Caco-2 (cell line): ENCODE measurements at regions of chr12 and their contacts with region 1.

Region 1: DNA sequence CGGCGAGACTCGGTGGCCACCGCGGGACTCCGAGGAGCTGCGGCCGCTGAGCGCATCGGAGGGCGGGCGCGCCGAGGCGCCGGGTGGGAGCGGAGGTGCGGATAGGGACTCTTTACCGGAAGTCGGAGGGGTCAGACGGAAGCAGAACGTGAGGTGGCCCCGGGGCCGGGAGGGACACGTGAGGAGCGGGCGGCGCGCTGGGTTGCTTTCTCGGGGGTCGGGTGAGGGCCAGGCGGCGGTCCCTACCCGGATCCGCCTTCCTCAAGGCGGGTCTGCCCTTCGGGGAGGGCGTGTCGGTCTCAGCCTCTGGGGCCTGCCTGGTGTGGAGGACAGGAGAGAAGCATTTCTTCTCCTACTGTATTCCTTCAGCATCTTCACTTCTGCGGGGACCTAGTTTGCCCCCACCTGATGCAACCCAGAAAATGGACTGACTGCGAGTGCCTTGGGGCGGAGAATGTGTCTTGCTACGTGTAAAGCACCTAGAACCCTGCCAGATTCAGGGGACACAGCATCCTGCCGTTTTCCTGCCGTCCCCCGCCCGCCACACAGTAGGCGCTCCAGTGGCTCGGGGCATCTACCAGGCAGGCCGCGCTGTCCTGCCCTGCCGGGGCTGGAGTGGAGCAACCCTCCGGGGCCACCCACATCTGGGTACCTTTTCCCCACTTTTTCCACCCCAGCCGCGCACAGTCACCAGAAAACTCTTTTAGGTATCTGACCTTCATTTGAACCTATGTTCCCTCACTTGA is 517 bp upstream of the ATXN2 start:
- DNase-seq: peak; percentile 96
- H3K4me3 ChIP-seq: peak overlapping the region; percentile 96
- H3K4me3 Mint-ChIP-seq: peak overlapping the region; percentile 89
- H3K27ac Mint-ChIP-seq: peak overlapping the region; percentile 85
- H3K4me1 ChIP-seq: peaks cover 19% of the 10 kb centered on the region
- H3K4me1 Mint-ChIP-seq: no peaks in the 10 kb centered on the region
- H3K27me3 ChIP-seq: no peaks in the 10 kb centered on the region
- H3K27me3 Mint-ChIP-seq: no peaks in the 10 kb centered on the region
- CTCF ChIP-seq: no peak

Region 2: GRCh38 chr12:111578274-111578970 is 21.2 kb before region 1 on chr12:
- CTCF ChIA-PET with region 1: no interaction called
- POLR2A ChIA-PET with region 1: no interaction called
- intact Hi-C with region 1: loop called (anchors 2 kb)
- DNase-seq: peak in 1 of 2 experiments; percentile 28
- H3K4me3 ChIP-seq: no peak overlapping the region
- H3K4me3 Mint-ChIP-seq: no peak overlapping the region
- H3K27ac Mint-ChIP-seq: peak overlapping the region; percentile 19
- H3K4me1 ChIP-seq: peaks cover 30% of the 10 kb centered on the region
- H3K4me1 Mint-ChIP-seq: peaks cover 6% of the 10 kb centered on the region
- H3K27me3 ChIP-seq: no peaks in the 10 kb centered on the region
- H3K27me3 Mint-ChIP-seq: no peaks in the 10 kb centered on the region
- CTCF ChIP-seq: no peak

Region 3: GRCh38 chr12:111624540-111624939 is 24.9 kb after region 1 on chr12:
- CTCF ChIA-PET with region 1: no interaction called
- POLR2A ChIA-PET with region 1: no interaction called
- intact Hi-C with region 1: no loop called
- DNase-seq: peak; percentile 50 to 58
- H3K4me3 ChIP-seq: no peak overlapping the region
- H3K4me3 Mint-ChIP-seq: no peak overlapping the region
- H3K27ac Mint-ChIP-seq: peak overlapping the region; percentile 51
- H3K4me1 ChIP-seq: peaks cover 9% of the 10 kb centered on the region; the same call in 1 of the 2 replicates
- H3K4me1 Mint-ChIP-seq: peaks cover 19% of the 10 kb centered on the region
- H3K27me3 ChIP-seq: no peaks in the 10 kb centered on the region
- H3K27me3 Mint-ChIP-seq: no peaks in the 10 kb centered on the region
- CTCF ChIP-seq: no peak

Region 4: GRCh38 chr12:111656016-111656415 is 56.4 kb after region 1 on chr12:
- CTCF ChIA-PET with region 1: no interaction called
- POLR2A ChIA-PET with region 1: no interaction called
- intact Hi-C with region 1: loop called (anchors 10 kb)
- DNase-seq: no peak
- H3K4me3 ChIP-seq: no peak overlapping the region
- H3K4me3 Mint-ChIP-seq: no peak overlapping the region
- H3K27ac Mint-ChIP-seq: no peak overlapping the region
- H3K4me1 ChIP-seq: no peaks in the 10 kb centered on the region
- H3K4me1 Mint-ChIP-seq: no peaks in the 10 kb centered on the region
- H3K27me3 ChIP-seq: no peaks in the 10 kb centered on the region
- H3K27me3 Mint-ChIP-seq: no peaks in the 10 kb centered on the region
- CTCF ChIP-seq: no peak

Region 5: GRCh38 chr12:111673503-111673902 is 73.9 kb after region 1 on chr12:
- CTCF ChIA-PET with region 1: no interaction called
- POLR2A ChIA-PET with region 1: no interaction called
- intact Hi-C with region 1: loop called (anchors 5 kb)
- DNase-seq: peak in 1 of 2 experiments; percentile 15
- H3K4me3 ChIP-seq: no peak overlapping the region
- H3K4me3 Mint-ChIP-seq: no peak overlapping the region
- H3K27ac Mint-ChIP-seq: no peak overlapping the region
- H3K4me1 ChIP-seq: no peaks in the 10 kb centered on the region
- H3K4me1 Mint-ChIP-seq: no peaks in the 10 kb centered on the region
- H3K27me3 ChIP-seq: no peaks in the 10 kb centered on the region
- H3K27me3 Mint-ChIP-seq: no peaks in the 10 kb centered on the region
- CTCF ChIP-seq: peak; percentile 15 to 48